Vagina (tissue), 2 donors: ENCODE measurements at regions of chr4 and their contacts with region 1.

Region 1: DNA sequence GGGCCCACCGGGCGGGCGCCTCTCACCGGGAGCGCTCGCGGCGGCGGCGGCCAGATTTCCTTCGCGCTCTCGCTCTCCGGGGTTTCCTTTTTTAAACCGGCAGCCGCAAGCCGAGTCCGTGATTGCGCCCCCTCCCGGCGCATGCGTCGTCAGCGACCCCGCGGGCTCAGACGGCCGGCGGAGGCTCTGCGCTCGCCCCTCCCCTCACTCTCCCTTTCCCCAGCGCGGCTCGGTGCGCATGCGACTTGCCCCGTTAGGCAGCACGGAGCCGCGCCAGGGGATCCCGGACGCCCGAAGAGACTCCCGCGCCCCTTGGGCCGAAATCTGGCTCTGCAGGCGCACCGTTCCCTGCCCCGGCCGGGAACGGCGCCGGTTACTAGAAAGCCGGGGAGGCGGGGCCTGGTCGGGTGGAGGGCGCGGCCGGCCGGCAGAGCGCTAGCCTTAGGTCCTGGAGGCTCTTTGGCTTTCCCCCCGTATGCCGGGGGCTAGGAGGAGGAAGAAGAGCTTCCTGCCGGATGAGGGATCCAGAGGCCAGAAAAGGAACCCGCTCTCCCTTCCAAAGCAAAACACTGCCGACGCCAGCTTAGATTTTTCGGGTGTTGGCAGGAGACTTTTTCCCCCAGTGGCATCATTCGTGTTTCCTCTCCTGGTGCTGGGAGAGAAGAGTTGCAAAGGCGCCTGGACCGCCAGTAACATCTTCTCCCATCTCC is at the start of gene CLOCK:
- DNase-seq: peak in 1 of 2 donors; percentile 91
- H3K4me3 ChIP-seq: peak within 1 kb of the TSS; percentile 82 to 93
- H3K27ac ChIP-seq: peak within 1 kb of the TSS; percentile 99
- H3K4me1 ChIP-seq: peaks cover 22% of the 10 kb centered on the region
- H3K27me3 ChIP-seq: no peaks in the 10 kb centered on the region
- CTCF ChIP-seq: peak in 2 of 3 experiments; percentile 33 to 53
- POLR2A ChIP-seq: peak in 1 of 2 donors; percentile 57
- total RNA-seq, gene CLOCK: 34.4 TPM

Region 2: GRCh38 chr4:55345980-55346850 is 200.7 kb before region 1 on chr4 and contains the start of gene SRD5A3:
- intact Hi-C with region 1: loop called (anchors 2 kb)
- DNase-seq: no peak
- H3K4me3 ChIP-seq: peak within 1 kb of the TSS; percentile 68 to 76
- H3K27ac ChIP-seq: peak within 1 kb of the TSS; percentile 98
- H3K4me1 ChIP-seq: peaks cover 23% of the 10 kb centered on the region
- H3K27me3 ChIP-seq: no peaks in the 10 kb centered on the region
- CTCF ChIP-seq: peak; percentile 81 to 98 (median 94)
- POLR2A ChIP-seq: peak in 1 of 2 donors; percentile 13
- total RNA-seq, gene SRD5A3: 25.5 TPM